HEK293T (cell line): ENCODE measurements at regions of chr11 and their contacts with region 1.

Region 1: DNA sequence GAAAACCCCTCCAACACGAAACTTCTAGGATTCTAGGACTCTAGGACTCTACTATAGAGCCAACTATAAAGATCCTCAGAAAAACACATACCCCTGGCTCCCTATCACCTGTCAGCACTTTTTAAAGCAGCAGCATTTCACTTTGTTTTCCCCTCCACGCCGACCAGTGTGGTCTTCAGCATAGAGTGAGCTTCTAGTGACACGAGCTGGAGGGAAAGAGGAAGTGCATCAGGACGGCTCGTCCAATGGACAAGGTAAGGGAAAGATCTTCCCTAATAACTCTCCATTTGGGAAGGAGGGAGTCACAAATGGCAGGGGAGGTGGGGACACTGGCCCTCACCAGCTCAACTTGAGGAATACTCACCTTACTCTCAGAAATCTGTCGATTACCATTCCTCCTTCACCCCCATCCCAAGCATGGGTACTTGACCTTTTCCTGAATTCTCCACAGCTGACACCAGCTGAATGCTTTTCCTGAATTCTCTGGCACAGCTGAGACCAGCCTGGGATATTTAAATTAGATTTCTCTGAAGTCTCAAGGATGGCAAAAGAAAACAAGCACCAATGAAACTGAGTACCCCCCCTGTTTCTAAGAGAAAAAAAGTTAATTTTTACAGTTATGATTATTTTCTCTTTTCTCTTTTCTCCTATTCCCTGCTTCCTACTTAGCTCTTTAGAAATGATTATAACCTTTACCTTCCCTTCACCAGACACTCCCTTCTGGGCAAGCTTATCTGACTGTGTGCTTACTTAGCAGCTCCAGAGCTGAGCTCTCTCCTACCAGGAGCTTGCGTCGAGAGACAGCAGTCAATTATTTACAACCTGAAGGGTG is 33.3 kb upstream of the NNMT start:
- DNase-seq: peak; percentile 73

Region 2: GRCh38 chr11:113806406-113806805 is 456.5 kb before region 1 on chr11:
- CTCF ChIA-PET with region 1: interaction called, 10 read pairs
- POLR2A ChIA-PET with region 1: no interaction called
- DNase-seq: peak; percentile 57

Region 3: GRCh38 chr11:113896156-113896879 is 366.6 kb before region 1 on chr11:
- CTCF ChIA-PET with region 1: interaction called, 36 read pairs
- POLR2A ChIA-PET with region 1: no interaction called
- DNase-seq: peak; percentile 60

Region 4: DNA sequence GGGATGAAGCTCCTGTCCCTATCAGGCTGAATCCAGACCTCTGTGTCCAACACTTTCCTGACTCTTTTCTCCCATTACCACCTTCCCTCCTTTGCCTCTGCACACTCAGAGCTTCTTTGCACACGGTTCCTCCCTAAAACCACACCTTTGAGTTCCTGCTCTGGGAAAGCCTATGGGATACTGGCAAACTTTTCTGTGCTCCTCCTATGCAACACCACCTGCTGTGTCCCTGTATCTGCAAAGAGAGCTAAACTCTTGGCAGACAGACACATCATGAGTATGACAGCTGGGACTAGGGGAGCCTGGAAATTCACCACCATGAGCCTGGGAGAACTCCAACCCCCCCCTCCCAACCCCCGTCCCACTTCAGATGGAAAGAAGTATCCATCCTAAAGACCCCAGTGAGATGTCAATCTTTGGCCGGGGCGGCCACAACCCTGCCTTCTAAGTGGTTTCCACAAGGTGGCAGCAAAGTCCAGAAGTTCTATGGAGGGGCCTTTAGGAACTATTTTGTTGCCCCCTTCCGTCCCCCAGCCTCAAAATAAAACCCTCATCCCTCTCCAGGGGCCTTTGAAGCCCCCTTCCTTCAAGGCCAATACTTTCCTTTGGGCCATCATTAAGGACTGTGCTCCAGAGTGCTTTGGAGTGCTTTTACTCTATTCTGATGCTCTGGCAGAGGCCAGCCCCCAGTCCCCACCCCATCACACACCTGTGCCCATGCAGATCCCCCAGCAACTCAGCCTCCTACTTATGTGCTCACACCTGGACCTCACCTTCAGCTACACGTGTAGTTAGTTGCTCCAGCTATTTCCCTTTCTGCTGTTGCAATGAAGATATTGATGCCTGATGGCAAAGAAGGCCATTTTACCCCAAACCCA is 268.6 kb before region 1 on chr11:
- CTCF ChIA-PET with region 1: interaction called, 56 read pairs
- POLR2A ChIA-PET with region 1: no interaction called
- DNase-seq: peak; percentile 67

Region 5: GRCh38 chr11:114026355-114026754 is 236.5 kb before region 1 on chr11:
- CTCF ChIA-PET with region 1: interaction called, 51 read pairs
- POLR2A ChIA-PET with region 1: no interaction called
- DNase-seq: peak; percentile 60

Region 6: DNA sequence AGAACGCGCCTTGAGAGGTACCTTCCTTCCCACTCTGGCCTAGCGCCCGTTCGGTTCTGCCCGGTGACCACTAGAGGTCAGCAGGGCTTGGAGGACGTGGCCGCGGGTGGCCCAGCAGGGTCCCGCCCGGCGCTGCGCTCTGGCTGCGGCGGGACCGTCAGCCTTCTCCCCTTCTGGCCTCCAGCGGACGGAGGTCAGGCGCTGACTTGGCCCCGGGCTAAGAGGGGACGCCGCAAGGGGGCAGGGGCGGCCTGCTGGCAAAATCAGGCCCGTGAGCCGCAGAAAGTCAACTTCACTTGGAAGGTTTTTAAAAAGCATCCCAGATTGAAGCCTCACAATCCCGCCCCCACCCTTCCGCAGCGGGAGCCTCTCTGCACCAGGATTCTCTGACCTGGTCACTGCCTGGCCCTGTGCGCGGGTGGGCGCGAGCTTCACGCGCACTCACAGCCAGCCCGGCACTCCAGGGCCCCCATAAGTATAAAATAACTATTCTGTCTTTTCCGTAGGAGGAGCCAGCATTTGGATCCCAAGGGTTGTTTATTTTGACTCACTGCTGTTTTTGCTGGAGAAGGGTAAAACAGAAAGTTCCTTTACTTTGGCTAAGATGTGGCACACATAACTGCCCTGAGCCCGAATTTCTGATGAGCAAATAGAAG is 226.6 kb before region 1 on chr11:
- CTCF ChIA-PET with region 1: interaction called, 21 read pairs
- POLR2A ChIA-PET with region 1: no interaction called
- DNase-seq: peak; percentile 81